A549 (cell line): ENCODE measurements at regions of chr16 and their contacts with region 1.

Region 1: DNA sequence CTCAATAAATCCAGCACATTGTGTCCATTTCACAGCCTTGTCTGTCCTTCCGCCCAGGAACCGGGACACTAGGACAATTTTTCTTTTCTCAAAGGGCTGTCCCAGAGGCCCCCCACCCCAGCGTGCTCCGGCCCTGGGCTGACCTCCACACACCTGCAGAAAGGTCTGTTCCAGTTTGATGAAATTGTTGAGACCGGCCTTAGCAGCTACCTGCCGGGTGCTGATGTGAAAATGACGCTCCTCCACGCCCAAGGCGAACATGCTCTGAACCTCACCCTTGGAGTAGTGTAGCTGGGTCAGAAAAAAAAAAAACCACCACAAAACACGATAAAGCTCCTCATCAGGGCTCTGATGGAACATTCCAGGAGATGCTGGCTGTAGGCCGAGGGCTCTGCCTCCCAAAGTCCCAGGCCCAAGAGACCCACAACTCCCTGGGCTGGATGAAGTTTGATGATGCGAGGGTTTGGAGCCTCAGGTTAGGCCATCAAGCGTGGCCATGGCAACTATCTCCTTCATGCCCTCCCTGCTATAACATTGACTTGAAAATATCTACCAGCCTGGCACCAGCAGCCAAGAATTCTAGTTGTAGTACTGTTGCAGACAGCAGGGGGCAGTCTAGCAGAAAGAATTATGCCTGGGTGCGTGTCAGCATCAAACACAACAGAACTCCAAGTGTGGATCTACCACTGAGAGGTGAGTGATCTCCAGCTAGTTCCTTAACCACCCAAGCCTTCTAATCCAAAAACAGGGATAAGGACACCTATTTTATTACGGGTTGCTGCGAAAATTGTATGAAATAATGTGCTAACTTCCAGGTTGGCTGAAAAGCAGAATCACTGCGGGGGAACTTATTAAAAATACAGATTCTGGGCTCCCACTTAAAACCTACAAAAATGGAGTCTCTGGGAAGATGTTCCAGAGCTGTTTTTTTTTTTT is 62.1 kb downstream of the RMI2 start:
- DNase-seq: peak; percentile 84 to 86
- ATAC-seq: peak; percentile 61 to 80
- H3K4me3 ChIP-seq: no peak overlapping the region
- H3K27ac ChIP-seq: peak overlapping the region; percentile 57 to 77
- H3K4me1 ChIP-seq: peaks cover 35% of the 10 kb centered on the region
- CTCF ChIP-seq: peak; percentile 79
- EP300 ChIP-seq: no peak
- POLR2A ChIP-seq: no peak
- RAD21 ChIP-seq: peak; percentile 93 to 94

Region 2: DNA sequence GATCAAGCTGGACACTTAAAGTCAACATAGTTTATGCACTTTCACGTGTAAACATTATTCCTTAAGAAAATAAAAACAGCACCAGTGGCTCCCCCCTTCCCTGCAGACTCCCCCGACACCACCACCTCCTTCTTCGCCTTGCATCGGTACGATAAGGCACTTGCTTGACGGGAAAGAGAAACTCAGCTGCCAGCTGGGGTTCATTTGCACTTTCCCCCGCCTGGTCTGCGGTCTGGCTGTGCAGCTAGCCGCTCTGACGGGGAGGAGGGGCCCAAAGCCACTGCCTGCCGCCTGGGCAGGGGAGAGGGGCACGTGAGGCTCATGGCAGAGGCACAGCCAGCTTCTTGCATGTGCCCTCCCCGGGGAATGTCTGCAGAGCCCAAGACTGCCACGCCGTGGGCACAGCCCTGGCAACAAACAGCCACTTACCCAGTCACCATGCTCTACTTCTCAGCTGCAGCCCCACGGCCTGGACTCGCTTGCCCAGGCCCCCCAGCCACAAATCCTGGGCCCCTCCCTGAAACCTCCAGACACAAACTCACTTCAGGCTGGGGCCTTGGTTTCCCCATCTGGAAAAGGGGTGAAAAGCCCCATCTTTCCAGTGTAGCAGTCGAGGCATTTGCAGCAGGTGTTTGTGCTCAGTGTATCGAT is 109.7 kb before region 1 on chr16:
- CTCF ChIA-PET with region 1: no interaction called
- POLR2A ChIA-PET with region 1: no interaction called
- DNase-seq: no peak
- ATAC-seq: peak in 1 of 2 experiments; percentile 61; a peak in 3 of 6 replicates
- H3K4me3 ChIP-seq: no peak overlapping the region
- H3K27ac ChIP-seq: no peak overlapping the region
- H3K4me1 ChIP-seq: no peaks in the 10 kb centered on the region
- CTCF ChIP-seq: no peak
- EP300 ChIP-seq: no peak
- POLR2A ChIP-seq: no peak
- RAD21 ChIP-seq: no peak

Region 3: GRCh38 chr16:11310997-11311561 is 96.2 kb before region 1 on chr16:
- CTCF ChIA-PET with region 1: no interaction called
- POLR2A ChIA-PET with region 1: no interaction called
- DNase-seq: no peak
- ATAC-seq: no peak
- H3K4me3 ChIP-seq: no peak overlapping the region
- H3K27ac ChIP-seq: 0 out of 6 replicates have a peak overlapping the region, but pooled peaks of 1 of the 2 experiments have one; percentile 28
- H3K4me1 ChIP-seq: peaks cover 22% of the 10 kb centered on the region
- CTCF ChIP-seq: no peak
- EP300 ChIP-seq: no peak
- POLR2A ChIP-seq: no peak
- RAD21 ChIP-seq: no peak

Region 4: DNA sequence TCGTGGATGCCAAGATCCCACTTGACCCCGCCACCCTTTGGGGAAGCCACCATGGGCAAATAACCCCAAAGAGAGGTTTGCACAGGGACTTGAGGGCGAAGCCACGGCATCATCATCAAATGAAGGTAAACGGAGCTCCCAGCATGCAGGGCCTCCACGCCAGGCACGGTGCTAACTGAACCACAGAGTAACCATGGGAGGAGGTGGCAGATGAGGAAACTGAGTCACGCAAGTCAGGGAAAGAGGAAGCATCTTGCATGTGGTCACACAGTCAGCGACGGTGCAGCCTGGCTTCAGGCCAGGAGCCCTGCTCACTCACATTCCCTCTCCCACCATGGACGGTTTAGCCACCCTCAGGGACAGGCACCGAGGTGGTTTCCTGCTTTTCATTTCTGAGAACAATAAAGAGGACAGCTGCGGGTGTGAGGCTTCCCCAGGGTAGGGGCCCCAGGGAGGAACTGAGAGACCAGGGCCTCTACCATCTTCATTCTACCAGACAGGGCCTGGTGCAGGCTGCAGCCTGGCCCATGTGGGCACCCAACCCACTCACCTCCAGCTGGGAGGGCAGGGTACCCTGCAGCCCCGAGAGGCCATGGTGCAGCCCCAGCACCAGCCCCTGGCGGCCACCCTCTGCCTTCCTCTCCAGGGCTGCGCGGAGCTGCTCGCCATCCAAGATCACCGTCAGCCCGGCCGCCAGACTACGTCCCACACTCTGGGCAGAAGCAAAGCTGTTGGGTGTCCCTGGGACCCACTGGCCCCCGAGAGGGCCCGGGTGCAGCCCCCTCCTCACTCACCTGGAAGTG is 16.2 kb after region 1 on chr16:
- CTCF ChIA-PET with region 1: interaction called, 23 read pairs
- POLR2A ChIA-PET with region 1: no interaction called
- DNase-seq: no peak
- ATAC-seq: 0 out of 6 replicates have a peak, but pooled peaks of 1 of the 2 experiments have one; percentile 34
- H3K4me3 ChIP-seq: no peak overlapping the region
- H3K27ac ChIP-seq: no peak overlapping the region
- H3K4me1 ChIP-seq: no peaks in the 10 kb centered on the region
- CTCF ChIP-seq: no peak
- EP300 ChIP-seq: no peak
- POLR2A ChIP-seq: no peak
- RAD21 ChIP-seq: no peak

Region 5: DNA sequence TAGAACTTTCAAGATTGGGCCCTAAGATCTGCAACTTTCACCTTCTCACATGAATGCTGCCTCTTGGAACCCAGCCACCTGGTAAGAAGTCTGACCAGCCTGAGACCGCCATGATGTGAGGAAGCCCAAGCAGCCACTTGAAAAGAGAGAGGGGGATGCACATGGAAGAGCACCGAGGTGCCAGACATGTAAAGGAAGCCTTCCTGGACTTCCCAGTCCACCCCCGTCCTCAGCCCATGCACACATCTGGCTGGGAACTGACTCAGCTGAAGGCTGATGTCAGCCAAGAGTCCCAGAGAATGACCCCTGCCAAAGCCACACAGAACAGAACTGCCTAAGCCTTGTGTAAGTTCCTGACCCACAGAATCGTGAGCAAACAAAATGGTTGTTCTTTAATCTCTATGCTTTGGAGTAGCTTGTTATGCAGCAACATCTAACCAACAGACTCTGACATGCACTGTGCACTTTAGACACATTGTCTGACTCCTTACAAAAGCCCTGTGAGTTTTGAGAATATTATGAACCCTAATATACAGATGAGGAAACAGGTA is 24.7 kb after region 1 on chr16:
- CTCF ChIA-PET with region 1: interaction called, 12 read pairs
- POLR2A ChIA-PET with region 1: no interaction called
- DNase-seq: no peak
- ATAC-seq: no peak
- H3K4me3 ChIP-seq: no peak overlapping the region
- H3K27ac ChIP-seq: no peak overlapping the region
- H3K4me1 ChIP-seq: 0 out of 3 replicates have a peak, but pooled peaks cover 3% of the 10 kb centered on the region
- CTCF ChIP-seq: no peak
- EP300 ChIP-seq: no peak
- POLR2A ChIP-seq: no peak
- RAD21 ChIP-seq: no peak

Region 6: GRCh38 chr16:11535471-11535870 is 128.2 kb after region 1 on chr16:
- CTCF ChIA-PET with region 1: interaction called, 40 read pairs
- POLR2A ChIA-PET with region 1: no interaction called
- DNase-seq: peak in 1 of 2 experiments; percentile 63
- ATAC-seq: peak; percentile 20 to 41; a peak in 3 of 6 replicates
- H3K4me3 ChIP-seq: no peak overlapping the region
- H3K27ac ChIP-seq: peak overlapping the region; percentile 56 to 80
- H3K4me1 ChIP-seq: peaks cover 32% of the 10 kb centered on the region
- CTCF ChIP-seq: no peak
- EP300 ChIP-seq: no peak
- POLR2A ChIP-seq: no peak
- RAD21 ChIP-seq: no peak

Region 7: DNA sequence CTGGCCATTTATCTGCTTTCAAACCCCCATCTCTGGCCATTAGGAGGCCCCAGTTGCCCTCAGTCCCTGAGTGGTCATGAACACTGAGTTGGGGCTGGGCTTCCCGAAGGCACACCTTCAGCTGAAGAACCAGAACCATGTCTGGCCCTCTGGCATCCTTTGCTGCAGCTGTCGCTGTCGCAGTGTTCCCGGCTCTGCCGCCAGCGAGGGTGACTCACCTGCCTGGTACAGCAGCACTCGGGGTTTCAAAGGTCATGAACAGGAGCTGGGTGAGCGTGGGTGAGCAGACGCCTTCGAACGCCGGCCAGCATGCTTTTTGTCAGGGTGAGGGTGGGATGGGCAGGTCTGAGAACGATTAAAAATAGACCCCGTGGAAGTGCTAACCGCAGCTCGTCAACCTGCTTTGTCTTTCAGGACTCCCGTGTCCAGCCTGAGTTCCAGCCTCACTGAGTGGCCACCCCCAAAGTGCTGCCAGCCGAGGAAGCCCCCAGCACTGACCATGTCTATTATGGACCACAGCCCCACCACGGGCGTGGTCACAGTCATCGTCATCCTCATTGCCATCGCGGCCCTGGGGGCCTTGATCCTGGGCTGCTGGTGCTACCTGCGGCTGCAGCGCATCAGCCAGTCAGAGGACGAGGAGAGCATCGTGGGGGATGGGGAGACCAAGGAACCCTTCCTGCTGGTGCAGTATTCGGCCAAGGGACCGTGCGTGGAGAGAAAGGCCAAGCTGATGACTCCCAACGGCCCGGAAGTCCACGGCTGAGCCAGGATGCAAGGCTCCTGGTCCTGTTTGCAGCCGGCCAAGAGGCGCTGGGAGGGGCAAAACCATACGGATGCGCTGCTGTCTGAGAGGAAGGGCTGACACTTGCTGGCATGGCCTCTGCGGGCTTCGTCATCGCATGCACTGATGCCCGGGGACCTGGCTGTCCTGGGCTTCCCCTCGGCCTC is 268.5 kb after region 1 on chr16:
- CTCF ChIA-PET with region 1: interaction called, 11 read pairs
- POLR2A ChIA-PET with region 1: no interaction called
- DNase-seq: peak; percentile 50 to 64
- ATAC-seq: peak; percentile 46 to 64
- H3K4me3 ChIP-seq: no peak overlapping the region
- H3K27ac ChIP-seq: peak overlapping the region; percentile 68 to 79
- H3K4me1 ChIP-seq: peaks cover 58% of the 10 kb centered on the region
- CTCF ChIP-seq: no peak
- EP300 ChIP-seq: no peak
- POLR2A ChIP-seq: no peak
- RAD21 ChIP-seq: peak in 1 of 2 experiments; percentile 14; a peak in 1 of 5 replicates